Mammary epithelial cell (primary cell): ENCODE measurements at regions of chr18 and their contacts with region 1.

Region 1: GRCh38 chr18:49250816-49251388 is 209.5 kb downstream of the DYM start:
- DNase-seq: no peak
- H3K4me3 ChIP-seq: no peak overlapping the region
- H3K27ac ChIP-seq: no peak overlapping the region
- H3K4me1 ChIP-seq: peaks cover 16% of the 10 kb centered on the region
- H3K27me3 ChIP-seq: no peaks in the 10 kb centered on the region
- CTCF ChIP-seq: peak; percentile 34 to 37

Region 2: DNA sequence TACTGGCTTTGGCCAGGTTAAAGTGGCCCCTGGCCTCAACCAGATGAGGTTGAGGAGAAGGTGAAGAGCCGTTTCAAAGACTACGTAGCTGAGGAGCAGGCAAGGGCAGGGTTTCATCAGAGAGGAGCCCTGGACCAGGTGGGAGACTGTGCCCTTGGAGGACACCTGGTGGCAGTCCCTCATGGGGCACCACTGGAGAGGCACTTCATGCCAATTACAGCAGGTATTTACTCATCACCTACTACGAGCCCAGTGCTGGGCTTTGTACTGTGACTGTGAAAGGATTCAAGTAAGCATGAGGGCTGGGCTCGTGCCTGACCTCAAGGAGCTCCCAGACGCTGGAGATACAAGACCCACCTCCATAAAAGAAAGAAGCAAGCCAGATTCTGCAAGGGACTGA is 337.7 kb before region 1 on chr18:
- CTCF ChIA-PET with region 1: no interaction called
- dilution Hi-C with region 1: no loop called
- in situ Hi-C with region 1: no loop called
- intact Hi-C with region 1: no loop called
- DNase-seq: no peak
- H3K4me3 ChIP-seq: no peak overlapping the region
- H3K27ac ChIP-seq: no peak overlapping the region
- H3K4me1 ChIP-seq: no peaks in the 10 kb centered on the region
- H3K27me3 ChIP-seq: no peaks in the 10 kb centered on the region
- CTCF ChIP-seq: peak; percentile 25 to 49

Region 3: DNA sequence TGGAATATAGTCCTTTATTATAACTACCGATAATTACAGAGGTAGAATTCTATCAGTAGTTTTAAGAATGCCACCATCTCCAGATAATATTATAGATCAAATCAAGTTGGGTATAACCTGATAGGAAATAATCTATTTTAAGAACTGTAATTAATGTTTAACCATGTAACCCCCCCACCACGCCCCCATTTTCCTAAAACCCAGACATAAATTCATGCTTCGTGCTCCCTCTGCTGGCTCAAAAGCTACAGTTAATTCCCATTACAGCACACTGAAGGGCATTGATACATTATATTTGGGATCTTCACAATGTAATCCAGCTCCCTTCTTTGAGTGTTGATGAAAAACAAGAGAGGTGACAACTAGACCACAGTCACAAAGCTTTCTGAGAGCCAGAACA is 72.2 kb before region 1 on chr18:
- CTCF ChIA-PET with region 1: no interaction called
- dilution Hi-C with region 1: no loop called
- in situ Hi-C with region 1: no loop called
- intact Hi-C with region 1: no loop called
- DNase-seq: no peak
- H3K4me3 ChIP-seq: no peak overlapping the region
- H3K27ac ChIP-seq: no peak overlapping the region
- H3K4me1 ChIP-seq: peaks cover 5% of the 10 kb centered on the region
- H3K27me3 ChIP-seq: no peaks in the 10 kb centered on the region
- CTCF ChIP-seq: peak; percentile 52 to 64

Region 4: GRCh38 chr18:49319590-49319989 is 68.7 kb after region 1 on chr18:
- CTCF ChIA-PET with region 1: no interaction called
- dilution Hi-C with region 1: no loop called
- in situ Hi-C with region 1: no loop called
- intact Hi-C with region 1: no loop called
- DNase-seq: no peak
- H3K4me3 ChIP-seq: no peak overlapping the region
- H3K27ac ChIP-seq: no peak overlapping the region
- H3K4me1 ChIP-seq: peaks cover 8% of the 10 kb centered on the region
- H3K27me3 ChIP-seq: no peaks in the 10 kb centered on the region
- CTCF ChIP-seq: no peak

Region 5: DNA sequence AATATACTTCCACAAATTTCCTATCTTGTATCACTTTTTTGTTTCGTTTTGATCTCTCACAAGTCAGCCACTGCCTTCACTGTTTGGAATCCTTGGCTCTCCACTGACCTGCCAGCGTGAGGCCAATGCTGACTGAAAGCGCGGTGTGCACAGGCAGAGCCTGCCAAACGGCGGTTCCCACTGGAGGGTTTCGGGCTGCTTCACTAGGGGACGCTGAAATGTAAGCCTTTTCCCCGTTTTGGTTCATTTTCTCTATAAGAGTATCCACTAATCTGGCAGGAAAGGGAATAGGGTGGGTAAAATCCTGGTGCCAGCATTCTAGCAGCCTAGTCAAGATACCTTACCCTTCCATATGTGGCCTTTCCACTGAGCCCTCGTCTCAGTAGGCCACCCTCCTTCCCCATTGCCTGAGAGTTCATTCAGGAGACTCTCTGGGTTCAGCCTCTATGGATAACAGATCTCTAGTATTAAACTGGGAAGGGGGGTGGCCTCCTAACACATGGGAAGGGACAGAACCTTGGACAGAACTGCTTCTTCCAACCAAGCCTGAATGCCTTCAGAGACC is 118.1 kb after region 1 on chr18:
- CTCF ChIA-PET with region 1: no interaction called
- dilution Hi-C with region 1: no loop called
- in situ Hi-C with region 1: no loop called
- intact Hi-C with region 1: loop called (anchors 5 kb)
- DNase-seq: peak; percentile 52
- H3K4me3 ChIP-seq: peak overlapping the region; percentile 26 to 64 (median 56)
- H3K27ac ChIP-seq: peak overlapping the region; percentile 68
- H3K4me1 ChIP-seq: peaks cover 9% of the 10 kb centered on the region
- H3K27me3 ChIP-seq: no peaks in the 10 kb centered on the region
- CTCF ChIP-seq: no peak

Region 6: DNA sequence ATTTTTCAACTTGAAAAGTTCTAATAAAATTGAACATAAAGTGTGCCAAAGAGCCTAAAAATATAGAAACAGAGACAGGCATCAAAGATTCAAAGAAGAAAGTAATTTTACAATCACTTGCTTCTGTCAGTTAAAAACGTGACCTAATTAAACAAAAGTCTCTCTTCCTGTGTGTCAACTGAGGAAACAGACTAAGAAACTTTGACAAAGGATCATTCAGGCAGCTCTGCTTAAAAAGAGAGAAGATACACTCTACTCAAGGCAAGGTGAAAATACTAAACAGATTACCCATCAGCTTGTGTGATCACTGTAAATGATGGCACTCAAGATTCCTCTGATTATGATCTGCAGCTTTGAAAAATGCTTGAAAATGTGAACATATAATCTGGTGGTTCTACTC is 161.8 kb after region 1 on chr18:
- CTCF ChIA-PET with region 1: no interaction called
- dilution Hi-C with region 1: no loop called
- in situ Hi-C with region 1: no loop called
- intact Hi-C with region 1: loop called (anchors 1 kb)
- DNase-seq: no peak
- H3K4me3 ChIP-seq: no peak overlapping the region
- H3K27ac ChIP-seq: no peak overlapping the region
- H3K4me1 ChIP-seq: no peaks in the 10 kb centered on the region
- H3K27me3 ChIP-seq: no peaks in the 10 kb centered on the region
- CTCF ChIP-seq: no peak